Calu3 (cell line): ENCODE measurements at regions of chr3 and their contacts with region 1.

Region 1: DNA sequence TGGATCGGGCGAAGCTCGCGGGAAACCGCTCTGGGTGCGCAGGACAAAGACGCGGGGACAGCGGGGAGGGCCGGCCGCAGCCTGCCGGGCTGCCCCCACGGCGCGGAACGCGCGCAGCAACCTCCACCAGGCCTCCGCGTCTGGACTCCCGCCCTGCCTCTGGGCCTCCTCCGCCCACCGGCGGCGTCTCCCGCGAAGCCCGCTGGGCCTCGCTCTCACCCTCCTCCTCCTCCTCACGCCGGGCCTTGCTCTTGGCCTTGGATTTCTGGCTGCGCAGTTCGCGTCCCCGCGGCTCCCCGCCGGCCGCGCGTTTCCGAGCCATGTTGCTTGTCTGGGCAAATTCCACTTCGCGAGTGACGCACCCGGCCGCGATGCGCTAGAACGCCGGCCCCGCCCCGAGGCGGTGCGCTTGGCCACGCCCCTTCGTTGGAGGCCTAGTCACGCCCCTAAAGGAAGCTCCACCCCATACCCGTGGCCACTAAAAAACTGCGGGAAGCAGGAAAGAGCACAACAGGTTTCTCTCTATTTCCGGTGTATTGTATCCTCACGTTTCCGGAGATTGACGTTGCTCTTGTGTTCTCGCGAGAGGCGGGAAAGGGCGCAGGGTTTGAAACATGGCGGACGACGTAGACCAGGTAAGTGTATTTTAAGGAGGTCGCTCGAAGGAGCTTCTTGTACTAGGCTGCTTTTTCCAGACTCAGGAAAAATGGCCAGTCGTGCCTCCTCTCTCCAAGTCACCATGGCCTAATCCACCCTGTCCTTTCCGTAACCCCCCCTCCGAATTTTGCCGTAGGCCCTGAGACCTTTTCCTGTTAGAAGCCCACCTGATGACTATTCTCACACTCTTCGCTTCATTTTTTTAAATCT is at the starts of genes LSM3 and XPC:
- DNase-seq: peak; percentile 95
- H3K4me3 Mint-ChIP-seq: peak within 1 kb of the TSS; percentile 97
- H3K27ac Mint-ChIP-seq: peak within 1 kb of the TSS; percentile 90
- H3K4me1 Mint-ChIP-seq: peaks cover 32% of the 10 kb centered on the region
- H3K27me3 Mint-ChIP-seq: no peaks in the 10 kb centered on the region
- CTCF ChIP-seq: no peak
- total RNA-seq, gene LSM3: 16.7 and 17.7 TPM in 2 replicates
- total RNA-seq, gene XPC: 23.8 and 24.3 TPM in 2 replicates

Region 2: GRCh38 chr3:14144423-14145075 is 33.9 kb before region 1 on chr3:
- CTCF ChIA-PET with region 1: interaction called, 3 read pairs
- intact Hi-C with region 1: loop called (anchors 2 kb)
- DNase-seq: peak; percentile 74
- H3K4me3 Mint-ChIP-seq: peak overlapping the region; percentile 27
- H3K27ac Mint-ChIP-seq: peak overlapping the region; percentile 94
- H3K4me1 Mint-ChIP-seq: peaks cover 17% of the 10 kb centered on the region
- H3K27me3 Mint-ChIP-seq: no peaks in the 10 kb centered on the region
- CTCF ChIP-seq: no peak

Region 3: DNA sequence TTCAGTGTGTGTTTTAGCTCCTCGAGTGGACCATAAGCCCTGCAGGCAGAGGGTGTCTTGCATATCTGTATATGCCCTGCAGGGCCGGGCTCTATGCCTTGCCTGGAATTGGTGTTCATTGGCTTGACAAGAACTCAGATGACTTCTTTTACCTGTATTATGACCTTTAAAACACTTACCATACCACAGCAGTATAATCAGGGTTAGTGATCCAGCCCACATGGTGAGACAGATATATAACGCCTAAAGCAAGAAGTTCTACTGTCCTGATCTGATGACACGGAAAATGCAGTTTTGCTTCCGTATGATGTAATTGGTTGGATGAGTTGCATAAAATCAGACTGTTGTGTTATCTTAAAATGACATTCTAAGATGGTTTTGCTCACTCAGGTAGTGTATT is 482.4 kb after region 1 on chr3:
- CTCF ChIA-PET with region 1: no interaction called
- intact Hi-C with region 1: no loop called
- DNase-seq: no peak
- H3K4me3 Mint-ChIP-seq: no peak overlapping the region
- H3K27ac Mint-ChIP-seq: no peak overlapping the region
- H3K4me1 Mint-ChIP-seq: no peaks in the 10 kb centered on the region
- H3K27me3 Mint-ChIP-seq: no peaks in the 10 kb centered on the region
- CTCF ChIP-seq: no peak